GM12878 (cell line): ENCODE measurements at regions of chr4 and their contacts with region 1.

Region 1: GRCh38 chr4:17810260-17811077 is at the starts of genes DCAF16 and NCAPG:
- DNase-seq: peak; percentile 98
- ATAC-seq: peak; percentile 88
- H3K4me3 ChIP-seq: peak within 1 kb of the TSS; percentile 90
- H3K27ac ChIP-seq: peak within 1 kb of the TSS; percentile 90
- H3K4me1 ChIP-seq: peaks cover 8% of the 10 kb centered on the region
- H3K27me3 ChIP-seq: no peaks in the 10 kb centered on the region; a peak in 1 of 4 replicates
- CTCF ChIP-seq: 0 out of 6 replicates have a peak, but pooled peaks of 1 of the 3 experiments have one; percentile 1
- EP300 ChIP-seq: peak; percentile 13 to 32; a peak in 1 of 4 replicates
- POLR2A ChIP-seq: peak; percentile 100
- RAD21 ChIP-seq: no peak
- polyA plus RNA-seq, gene DCAF16: 5.8 to 6.1 TPM
- polyA plus RNA-seq, gene NCAPG: 17.3 to 22.9 TPM

Region 2: GRCh38 chr4:17544205-17544604 is 266.3 kb before region 1 on chr4:
- CTCF ChIA-PET with region 1: interaction called, 93 read pairs
- POLR2A ChIA-PET with region 1: interaction called, 3 read pairs
- RAD21 ChIA-PET with region 1: interaction called, 63 read pairs
- SMC1A ChIA-PET with region 1: interaction called, 68 read pairs
- in situ Hi-C with region 1: loop called (anchors 5 kb)
- intact Hi-C with region 1: loop called (anchors 1 kb)
- DNase-seq: no peak
- ATAC-seq: peak; percentile 41; the same call in 2 of the 3 replicates
- H3K4me3 ChIP-seq: no peak overlapping the region
- H3K27ac ChIP-seq: no peak overlapping the region
- H3K4me1 ChIP-seq: no peaks in the 10 kb centered on the region
- H3K27me3 ChIP-seq: no peaks in the 10 kb centered on the region
- CTCF ChIP-seq: no peak
- EP300 ChIP-seq: no peak
- POLR2A ChIP-seq: no peak
- RAD21 ChIP-seq: no peak

Region 3: DNA sequence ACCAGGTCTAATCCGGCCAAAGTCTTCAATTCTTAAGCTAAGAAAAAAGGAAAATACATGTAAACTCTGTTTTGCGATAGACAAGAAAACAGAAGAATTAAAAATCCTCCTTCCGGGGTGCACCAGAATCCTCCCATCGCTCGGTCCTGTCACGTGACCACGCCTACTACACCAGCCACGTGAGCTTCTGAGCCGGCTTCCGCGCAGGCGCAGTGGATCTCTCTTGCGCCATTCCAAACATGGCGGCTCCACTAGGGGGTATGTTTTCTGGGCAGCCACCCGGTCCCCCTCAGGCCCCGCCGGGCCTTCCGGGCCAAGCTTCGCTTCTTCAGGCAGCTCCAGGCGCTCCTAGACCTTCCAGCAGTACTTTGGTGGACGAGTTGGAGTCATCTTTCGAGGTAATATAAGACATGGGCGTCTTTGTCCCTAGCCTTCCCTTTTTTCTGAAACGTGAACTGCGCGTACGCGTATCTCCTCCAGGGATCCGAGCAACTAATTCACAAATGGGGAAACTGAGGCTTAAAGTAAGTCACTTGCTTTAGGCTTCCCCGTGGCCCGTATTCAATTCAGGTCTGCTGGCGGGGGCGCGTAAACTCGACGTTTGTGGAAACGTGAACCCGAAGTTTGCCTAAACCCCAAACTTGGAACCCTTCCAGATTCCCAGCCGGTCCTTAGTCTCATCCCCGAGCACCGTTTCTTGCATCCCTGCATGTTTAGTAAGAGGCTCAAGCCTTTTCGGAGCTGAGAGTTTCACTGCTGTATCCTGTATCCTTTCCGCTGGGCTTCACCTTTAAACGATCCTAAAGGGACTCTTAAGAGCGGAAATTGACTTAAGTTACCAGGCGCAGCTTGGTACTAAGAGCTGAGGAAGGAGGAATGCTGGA is 195.8 kb before region 1 on chr4 and contains the start of gene MED28:
- CTCF ChIA-PET with region 1: interaction called, 8 read pairs
- POLR2A ChIA-PET with region 1: interaction called, 12 read pairs
- RAD21 ChIA-PET with region 1: interaction called, 4 read pairs
- SMC1A ChIA-PET with region 1: interaction called, 4 read pairs
- in situ Hi-C with region 1: no loop called
- intact Hi-C with region 1: loop called (anchors 1 kb)
- DNase-seq: peak; percentile 68
- ATAC-seq: peak; percentile 89
- H3K4me3 ChIP-seq: peak within 1 kb of the TSS; percentile 79
- H3K27ac ChIP-seq: peak within 1 kb of the TSS; percentile 84
- H3K4me1 ChIP-seq: peaks cover 6% of the 10 kb centered on the region; the same call in 1 of the 2 replicates
- H3K27me3 ChIP-seq: no peaks in the 10 kb centered on the region
- CTCF ChIP-seq: 0 out of 6 replicates have a peak, but pooled peaks of 1 of the 3 experiments have one; percentile 2
- EP300 ChIP-seq: no peak
- POLR2A ChIP-seq: peak; percentile 91
- RAD21 ChIP-seq: no peak
- polyA plus RNA-seq, gene MED28: 44.4 to 77.4 TPM

Region 4: DNA sequence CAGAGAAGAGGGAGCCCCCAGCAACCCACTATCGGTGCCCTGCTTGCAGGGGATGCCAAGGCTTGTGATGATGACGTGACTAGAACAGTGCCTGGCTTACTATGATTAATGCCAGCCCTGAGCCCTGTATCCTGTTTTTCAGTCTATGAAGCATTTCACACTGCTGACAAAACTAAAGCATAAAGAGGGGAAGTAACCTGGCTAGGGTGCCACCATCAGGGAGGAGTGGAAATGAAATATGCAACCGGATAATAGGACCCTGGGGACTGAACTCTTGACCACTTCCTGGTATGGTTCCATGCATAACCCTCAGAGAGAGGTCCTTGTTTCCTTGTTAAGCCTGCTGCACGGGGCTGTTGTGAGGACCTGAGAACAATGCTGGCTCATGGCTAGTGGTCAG is 145.7 kb before region 1 on chr4:
- CTCF ChIA-PET with region 1: no interaction called
- POLR2A ChIA-PET with region 1: no interaction called
- RAD21 ChIA-PET with region 1: no interaction called
- SMC1A ChIA-PET with region 1: no interaction called
- in situ Hi-C with region 1: no loop called
- intact Hi-C with region 1: loop called (anchors 5 kb)
- DNase-seq: peak; percentile 66
- ATAC-seq: peak; percentile 90
- H3K4me3 ChIP-seq: no peak overlapping the region
- H3K27ac ChIP-seq: no peak overlapping the region
- H3K4me1 ChIP-seq: peaks cover 8% of the 10 kb centered on the region
- H3K27me3 ChIP-seq: no peaks in the 10 kb centered on the region
- CTCF ChIP-seq: no peak
- EP300 ChIP-seq: no peak
- POLR2A ChIP-seq: no peak
- RAD21 ChIP-seq: no peak

Region 5: GRCh38 chr4:17786567-17786966 is 23.9 kb before region 1 on chr4:
- CTCF ChIA-PET with region 1: interaction called, 4 read pairs
- POLR2A ChIA-PET with region 1: no interaction called
- RAD21 ChIA-PET with region 1: no interaction called
- SMC1A ChIA-PET with region 1: interaction called, 12 read pairs
- in situ Hi-C with region 1: no loop called
- intact Hi-C with region 1: no loop called
- DNase-seq: no peak
- ATAC-seq: no peak; the same call in 2 of the 3 replicates
- H3K4me3 ChIP-seq: no peak overlapping the region
- H3K27ac ChIP-seq: no peak overlapping the region
- H3K4me1 ChIP-seq: no peaks in the 10 kb centered on the region
- H3K27me3 ChIP-seq: no peaks in the 10 kb centered on the region; a peak in 1 of 4 replicates
- CTCF ChIP-seq: no peak
- EP300 ChIP-seq: no peak
- POLR2A ChIP-seq: no peak
- RAD21 ChIP-seq: no peak

Region 6: GRCh38 chr4:17854036-17854435 is 43.6 kb after region 1 on chr4:
- CTCF ChIA-PET with region 1: no interaction called
- POLR2A ChIA-PET with region 1: no interaction called
- RAD21 ChIA-PET with region 1: no interaction called
- SMC1A ChIA-PET with region 1: no interaction called
- in situ Hi-C with region 1: no loop called
- intact Hi-C with region 1: no loop called
- DNase-seq: no peak
- ATAC-seq: no peak
- H3K4me3 ChIP-seq: no peak overlapping the region
- H3K27ac ChIP-seq: no peak overlapping the region
- H3K4me1 ChIP-seq: no peaks in the 10 kb centered on the region
- H3K27me3 ChIP-seq: no peaks in the 10 kb centered on the region
- CTCF ChIP-seq: no peak
- EP300 ChIP-seq: no peak
- POLR2A ChIP-seq: no peak
- RAD21 ChIP-seq: no peak

Region 7: GRCh38 chr4:18021722-18022571 is 211.5 kb after region 1 on chr4 and contains the start of gene LCORL:
- CTCF ChIA-PET with region 1: interaction called, 3 read pairs
- POLR2A ChIA-PET with region 1: no interaction called
- RAD21 ChIA-PET with region 1: interaction called, 4 read pairs
- SMC1A ChIA-PET with region 1: interaction called, 3 read pairs
- in situ Hi-C with region 1: loop called (anchors 10 kb)
- intact Hi-C with region 1: loop called (anchors 2 kb)
- DNase-seq: peak; percentile 90
- ATAC-seq: peak; percentile 87
- H3K4me3 ChIP-seq: peak within 1 kb of the TSS; percentile 90
- H3K27ac ChIP-seq: peak within 1 kb of the TSS; percentile 84
- H3K4me1 ChIP-seq: no peaks in the 10 kb centered on the region; the same call in 1 of the 2 replicates
- H3K27me3 ChIP-seq: no peaks in the 10 kb centered on the region
- CTCF ChIP-seq: peak; percentile 29 to 45 (median 35); a peak in 4 of 6 replicates
- EP300 ChIP-seq: no peak
- POLR2A ChIP-seq: peak; percentile 77
- RAD21 ChIP-seq: peak; percentile 43; the same call in 1 of the 2 replicates
- polyA plus RNA-seq, gene LCORL: 2.2 to 3.3 TPM